ENCODE measurements at regions of chr17 and their contacts with region 1.

Region 1: GRCh38 chr17:48636177-48637018 is 10.2 kb upstream of the HOXB9 start:
- ATAC-seq: peak; percentile 77 to 99 (median 98)
- H3K4me3 ChIP-seq: peak overlapping the region in 2 of 5 donors; percentile 1 to 16
- H3K27ac ChIP-seq: no peak overlapping the region
- H3K4me1 ChIP-seq: peaks cover 2 to 3% of the 10 kb centered on the region in 2 donors

Region 2: DNA sequence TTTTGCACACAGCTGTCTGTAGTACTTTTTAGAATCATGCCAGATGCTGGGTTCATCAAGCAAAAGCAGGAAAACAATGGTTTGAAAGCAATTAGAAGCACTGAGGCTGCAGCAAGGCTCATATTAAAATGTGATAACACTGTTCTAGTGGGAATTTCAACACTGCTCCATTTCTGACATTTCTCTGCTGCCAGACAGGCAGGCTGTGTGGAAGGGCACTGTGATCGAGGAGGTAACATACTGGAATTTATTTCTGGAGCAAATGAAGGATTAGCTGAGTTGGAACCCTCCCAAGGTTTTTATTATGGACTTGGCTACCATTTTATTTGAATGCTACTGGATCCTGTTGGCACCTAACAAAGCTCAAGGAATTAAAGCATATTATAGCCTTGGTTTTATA is 273.2 kb before region 1 on chr17:
- in situ Hi-C with region 1: no loop called
- ATAC-seq: peak in 1 of 8 experiments; percentile 46
- H3K4me3 ChIP-seq: no peak overlapping the region
- H3K27ac ChIP-seq: peak overlapping the region in 1 of 2 donors; percentile 44
- H3K4me1 ChIP-seq: peaks cover 0 to 34% of the 10 kb centered on the region in 2 donors

Region 3: DNA sequence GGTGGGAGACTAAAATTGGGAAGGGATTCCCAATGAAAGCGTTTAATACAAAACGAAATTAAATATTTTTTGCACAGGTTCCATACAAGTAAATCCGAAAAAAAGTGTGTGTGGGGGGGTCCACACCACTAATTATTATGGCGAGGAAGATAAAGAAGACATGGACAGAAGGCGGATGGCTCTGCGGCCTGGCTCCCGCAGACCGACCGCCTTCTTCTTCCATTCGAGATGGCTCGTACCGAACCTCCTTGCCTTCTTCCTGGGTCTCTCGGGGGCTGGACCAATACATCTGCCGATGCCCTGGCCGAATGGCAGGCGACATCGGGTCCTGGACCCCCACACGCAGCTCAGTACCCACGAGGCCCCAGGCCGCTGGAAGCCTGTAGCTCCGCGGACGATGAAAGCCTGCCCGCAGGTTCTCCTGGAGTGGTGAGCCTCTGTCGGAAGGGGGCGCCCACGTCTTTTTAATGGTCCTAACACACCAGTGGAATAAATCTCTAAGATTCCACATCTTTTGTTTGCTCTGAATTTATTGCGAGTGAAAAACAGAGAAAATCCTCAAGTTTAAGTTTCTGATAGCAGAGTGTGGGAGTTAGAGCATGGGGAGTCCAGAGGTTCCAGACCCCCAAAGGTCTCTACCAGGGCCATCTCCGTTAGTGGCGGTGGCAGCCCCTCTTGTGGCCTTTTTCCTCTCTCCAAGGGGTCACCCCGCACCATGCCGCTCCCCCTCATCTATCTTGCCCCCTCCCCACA is 88.0 kb after region 1 on chr17:
- in situ Hi-C with region 1: loop called in 1 of 9 experiments (anchors 25 kb)
- ATAC-seq: peak; percentile 84 to 92 (median 90)
- H3K4me3 ChIP-seq: no peak overlapping the region
- H3K27ac ChIP-seq: no peak overlapping the region
- H3K4me1 ChIP-seq: peaks cover 0 to 7% of the 10 kb centered on the region in 2 donors